GM23248 (cell line): ENCODE measurements at regions of chr18 and their contacts with region 1.

Region 1: GRCh38 chr18:3665780-3666525 is 216.0 kb downstream of the TGIF1 start:
- DNase-seq: peak; percentile 92
- H3K4me3 ChIP-seq: no peak overlapping the region
- H3K27ac ChIP-seq: peak overlapping the region; percentile 22
- H3K4me1 ChIP-seq: peaks cover 9% of the 10 kb centered on the region; the same call in 1 of the 2 replicates
- H3K27me3 ChIP-seq: no peaks in the 10 kb centered on the region

Region 2: DNA sequence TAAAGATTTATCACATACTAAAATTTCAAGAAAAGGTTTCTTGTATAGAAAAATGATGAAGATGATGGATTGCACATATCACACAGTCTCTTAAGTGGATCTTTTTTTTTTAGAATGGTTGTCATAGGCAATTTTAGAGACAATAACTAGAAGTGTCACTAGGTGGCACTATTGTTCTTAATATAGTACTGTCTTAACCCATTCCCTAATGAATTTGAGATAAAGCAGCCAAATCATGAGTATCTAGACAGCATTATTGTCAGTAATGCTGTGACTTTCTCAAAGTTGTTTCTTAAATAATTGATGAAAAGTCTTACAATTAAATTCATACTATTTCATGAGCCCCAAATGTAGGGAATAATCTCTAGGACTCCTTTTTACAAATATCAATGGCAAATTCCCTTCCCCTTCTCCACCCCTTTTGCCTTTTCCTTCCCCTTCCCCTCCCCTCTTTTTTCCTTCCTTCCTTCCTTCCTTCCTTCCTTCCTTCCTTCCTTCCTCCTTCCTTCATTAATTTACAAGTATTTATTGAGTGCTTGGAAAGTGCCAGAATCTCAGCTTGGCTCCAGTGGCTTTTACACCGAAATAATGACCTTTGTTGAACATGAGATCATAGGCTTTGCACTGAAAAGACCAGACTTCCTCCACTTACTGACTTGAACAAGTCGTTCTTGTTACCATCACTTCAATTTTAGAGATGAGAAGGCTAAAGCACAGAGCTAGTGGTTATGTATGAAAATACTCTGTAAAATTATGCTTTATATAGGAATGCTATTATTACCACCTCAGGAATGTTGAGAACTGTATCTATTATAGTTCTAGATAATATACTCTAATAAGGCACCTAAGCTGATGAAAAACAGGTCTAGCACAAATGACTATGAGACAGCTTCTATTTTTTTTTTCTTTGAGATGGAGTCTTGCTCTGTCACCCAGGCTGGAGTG is 384.2 kb before region 1 on chr18:
- in situ Hi-C with region 1: loop called (anchors 5 kb)
- DNase-seq: peak; percentile 81
- H3K4me3 ChIP-seq: no peak overlapping the region
- H3K27ac ChIP-seq: no peak overlapping the region
- H3K4me1 ChIP-seq: peaks cover 6% of the 10 kb centered on the region
- H3K27me3 ChIP-seq: no peaks in the 10 kb centered on the region

Region 3: DNA sequence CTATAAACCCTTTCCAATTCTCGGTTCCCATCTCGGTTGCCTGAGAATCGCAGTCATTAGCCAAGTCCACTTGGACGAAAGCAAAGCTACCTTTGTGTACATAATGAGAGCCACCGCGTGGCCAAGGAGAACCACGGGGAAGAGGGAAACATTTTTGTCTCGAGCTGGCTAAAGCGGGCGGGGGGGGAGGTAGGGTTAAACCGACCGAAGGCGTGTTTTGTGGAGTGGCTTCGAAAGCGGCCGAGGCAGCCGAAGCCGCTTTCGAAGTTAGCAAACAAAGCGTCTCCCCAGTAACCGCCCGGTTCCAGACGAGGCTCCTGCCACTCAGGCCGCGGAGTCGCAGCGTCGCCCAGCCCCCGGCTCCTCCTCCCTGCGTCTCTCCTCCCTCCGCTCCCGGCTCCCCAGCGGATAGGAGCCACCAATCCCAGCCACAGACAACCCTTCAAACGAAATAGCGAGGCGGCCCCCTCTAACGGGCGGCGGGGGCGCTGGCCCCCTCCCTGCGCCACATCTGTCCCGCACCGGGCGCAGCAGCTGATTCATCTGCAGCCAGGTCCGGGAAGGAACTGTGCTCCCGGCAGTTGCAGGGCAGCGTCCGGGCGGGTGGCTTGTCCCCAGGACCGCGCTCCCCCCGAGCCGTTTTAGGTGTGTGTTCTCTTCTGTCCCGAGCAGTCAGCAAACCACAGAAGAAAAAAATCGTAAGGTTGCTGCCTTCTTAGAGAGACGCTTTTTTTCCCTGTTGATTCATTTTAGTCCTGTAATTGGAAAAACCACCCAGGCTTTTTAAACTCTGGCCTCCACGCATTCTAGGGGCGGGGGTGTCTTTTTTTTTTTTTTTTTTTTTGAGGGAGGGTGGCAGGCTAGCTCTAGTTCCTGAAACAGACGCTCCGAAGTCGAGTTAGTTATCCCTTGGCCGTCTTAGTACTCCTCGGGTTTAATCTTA is 217.8 kb before region 1 on chr18:
- in situ Hi-C with region 1: loop called (anchors 10 kb)
- DNase-seq: peak; percentile 99
- H3K4me3 ChIP-seq: peak overlapping the region; percentile 98
- H3K27ac ChIP-seq: peak overlapping the region; percentile 100
- H3K4me1 ChIP-seq: peaks cover 17% of the 10 kb centered on the region
- H3K27me3 ChIP-seq: no peaks in the 10 kb centered on the region

Region 4: DNA sequence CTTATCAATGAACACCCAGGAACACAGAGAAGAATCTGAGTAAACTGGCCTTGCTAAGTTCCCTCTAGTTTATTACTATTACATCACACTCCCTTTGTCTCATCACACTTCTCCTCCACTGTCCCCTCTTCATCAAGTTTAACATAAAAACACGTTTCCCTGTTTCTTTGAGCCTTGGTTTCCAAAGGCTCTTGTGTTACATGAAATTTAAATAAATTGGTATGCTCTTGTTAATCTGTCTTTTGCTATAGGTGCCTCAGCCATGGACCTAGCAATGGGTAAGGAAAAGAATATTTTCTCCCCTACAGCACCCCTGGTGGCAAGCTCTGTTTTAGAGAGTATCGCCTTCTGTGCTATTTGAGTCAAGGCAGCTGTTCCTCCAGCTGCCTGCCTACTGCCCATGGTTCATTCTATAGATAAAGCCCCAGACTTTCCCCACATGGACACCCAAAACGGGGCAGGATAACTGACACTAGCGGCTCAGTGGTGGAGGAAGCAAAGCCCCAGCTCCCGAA is 184.2 kb before region 1 on chr18:
- in situ Hi-C with region 1: no loop called
- DNase-seq: peak; percentile 46
- H3K4me3 ChIP-seq: no peak overlapping the region
- H3K27ac ChIP-seq: no peak overlapping the region
- H3K4me1 ChIP-seq: no peaks in the 10 kb centered on the region
- H3K27me3 ChIP-seq: no peaks in the 10 kb centered on the region; the same call in 1 of the 2 replicates

Region 5: DNA sequence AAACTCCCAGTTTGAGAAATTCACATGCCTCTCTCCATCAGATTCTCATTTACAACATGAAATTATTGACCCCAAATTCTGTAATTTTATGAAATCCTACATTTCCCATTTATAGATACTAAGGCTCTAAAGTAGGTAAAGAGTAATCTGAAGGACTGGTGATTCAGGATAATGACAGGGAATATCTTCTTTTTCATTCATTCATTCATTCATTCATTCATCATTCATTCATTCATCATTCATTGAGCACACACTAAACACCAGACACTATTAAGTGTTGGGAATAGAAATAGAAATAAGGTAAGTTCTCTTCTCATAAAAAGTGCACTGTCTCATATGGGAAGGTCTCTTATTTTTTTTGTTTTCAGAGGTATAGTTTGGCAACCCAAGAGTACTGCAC is 99.1 kb before region 1 on chr18:
- in situ Hi-C with region 1: no loop called
- DNase-seq: no peak
- H3K4me3 ChIP-seq: no peak overlapping the region
- H3K27ac ChIP-seq: no peak overlapping the region
- H3K4me1 ChIP-seq: no peaks in the 10 kb centered on the region
- H3K27me3 ChIP-seq: no peaks in the 10 kb centered on the region

Region 6: DNA sequence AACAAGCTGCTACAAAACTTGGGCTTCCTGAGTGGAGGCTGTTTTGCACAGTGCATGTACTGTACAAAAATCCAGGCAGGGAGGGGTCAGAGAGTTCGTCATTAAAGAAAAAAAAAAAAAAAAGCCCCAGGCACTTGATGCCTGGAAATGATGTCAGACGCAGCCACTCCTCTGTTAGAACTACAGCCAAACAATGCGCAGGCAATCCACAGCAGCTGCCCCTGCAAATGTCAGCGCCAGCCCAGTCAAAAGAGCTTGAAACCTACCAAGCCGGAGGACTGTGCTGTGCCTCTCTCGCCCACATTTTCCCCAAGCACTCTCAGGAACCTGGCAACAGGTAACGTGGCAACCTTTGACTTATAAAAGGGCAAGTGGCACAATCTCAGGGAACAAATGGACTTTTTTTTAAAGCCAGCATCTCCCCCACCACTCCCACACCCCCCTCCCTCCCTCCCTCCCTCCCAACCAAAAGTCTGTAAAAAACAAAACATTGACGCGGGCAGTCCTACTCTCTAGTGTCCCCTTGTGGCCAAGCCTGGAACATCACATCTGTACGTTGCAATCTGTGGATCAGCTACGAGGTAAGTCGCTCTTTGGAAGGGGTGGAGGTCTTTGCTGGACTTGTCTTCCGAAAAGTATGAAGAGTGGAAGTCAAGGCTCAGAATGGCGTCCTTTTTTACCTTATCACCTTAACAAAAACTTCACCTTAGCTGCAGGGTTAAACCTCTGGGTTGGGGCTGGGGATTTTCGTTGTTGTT is 71.9 kb before region 1 on chr18:
- in situ Hi-C with region 1: loop called (anchors 10 kb)
- DNase-seq: peak; percentile 97
- H3K4me3 ChIP-seq: peak overlapping the region; percentile 86
- H3K27ac ChIP-seq: peak overlapping the region; percentile 100
- H3K4me1 ChIP-seq: peaks cover 42% of the 10 kb centered on the region
- H3K27me3 ChIP-seq: no peaks in the 10 kb centered on the region